ENCODE measurements at regions of chr12 and their contacts with region 1.

Region 1: DNA sequence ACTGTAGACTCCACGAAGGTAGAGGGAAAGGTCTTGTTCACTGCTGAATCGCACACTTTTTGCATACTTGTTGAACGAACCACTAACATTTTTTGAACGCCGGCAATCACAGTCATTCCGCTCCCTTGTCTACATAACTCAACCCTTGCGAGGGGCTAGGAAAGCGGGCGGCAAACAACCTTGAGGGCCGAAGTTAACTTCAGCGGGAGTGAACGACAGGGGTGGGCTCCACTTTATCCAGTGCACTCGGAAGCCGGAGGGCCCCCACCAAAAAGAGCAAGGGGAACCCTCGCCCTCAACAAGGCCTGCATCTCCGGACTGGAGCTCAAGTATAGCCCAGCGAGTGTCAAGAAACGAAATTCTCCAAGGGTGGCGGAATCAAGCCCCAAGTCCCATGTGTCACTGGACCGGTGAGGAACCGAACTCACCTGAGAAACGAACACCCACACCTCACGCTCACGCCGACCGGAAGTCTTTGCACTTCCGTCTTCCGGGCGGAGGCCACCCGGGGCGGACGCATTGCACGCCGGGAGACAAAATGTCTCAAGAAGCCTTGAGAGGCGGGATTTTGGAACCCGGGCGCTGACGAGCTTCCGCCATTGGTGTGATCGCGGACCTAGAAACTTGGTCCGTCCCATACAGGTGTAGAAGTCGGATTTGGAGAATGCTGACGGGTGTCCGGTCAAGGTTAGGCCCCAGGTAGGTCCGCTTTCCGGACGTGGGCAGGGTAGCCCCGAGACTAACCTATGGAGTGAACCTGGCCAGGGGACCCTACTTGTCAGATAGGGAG is at the start of gene LLPH:
- ATAC-seq: peak; percentile 79 to 98 (median 92)
- H3K4me3 ChIP-seq: peak within 1 kb of the TSS; percentile 51 to 93 (median 70)
- H3K27ac ChIP-seq: peak within 1 kb of the TSS; percentile 0 to 73
- H3K4me1 ChIP-seq: peaks cover 0 to 5% of the 10 kb centered on the region in 2 donors
- total RNA-seq, gene LLPH: 5.8 to 39.8 (median 12.9) TPM

Region 2: DNA sequence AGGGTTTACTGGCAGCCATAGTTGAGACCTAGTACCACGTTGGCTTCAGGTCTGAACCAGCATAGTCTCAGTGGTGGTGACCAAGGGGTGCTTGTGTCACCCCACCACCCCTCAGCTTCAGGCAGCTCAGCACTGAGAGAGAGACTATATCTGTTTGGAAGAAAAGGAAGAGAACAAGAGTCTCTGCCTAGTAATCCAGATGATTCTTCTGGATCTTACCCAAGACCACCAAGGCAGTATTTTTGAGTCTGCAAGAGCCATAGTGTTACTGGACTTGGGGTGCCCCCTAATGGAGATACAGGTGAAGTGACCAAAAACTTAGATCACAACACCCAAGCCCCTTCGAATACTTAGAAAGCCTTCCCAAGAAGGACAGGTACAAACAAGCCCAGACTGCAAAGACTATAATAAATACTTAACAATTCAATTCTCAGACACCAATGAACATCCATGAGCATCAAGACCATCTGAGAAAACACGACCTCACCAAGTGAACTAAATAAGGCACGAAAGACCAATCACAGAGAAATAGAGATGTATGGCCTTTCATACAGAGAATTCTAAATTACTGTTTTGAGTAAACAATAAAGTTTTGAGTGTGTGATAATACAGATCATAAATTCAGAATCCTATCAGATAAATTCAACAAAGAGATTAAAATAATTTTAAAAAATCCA is 278.9 kb after region 1 on chr12:
- in situ Hi-C with region 1: loop called in 2 of 9 experiments (anchors 25 kb)
- ATAC-seq: peak in 3 of 8 experiments; percentile 61 to 80 (median 64)
- H3K4me3 ChIP-seq: no peak overlapping the region
- H3K27ac ChIP-seq: no peak overlapping the region
- H3K4me1 ChIP-seq: no peaks in the 10 kb centered on the region